A673 (cell line): ENCODE measurements at regions of chr3 and their contacts with region 1.

Region 1: DNA sequence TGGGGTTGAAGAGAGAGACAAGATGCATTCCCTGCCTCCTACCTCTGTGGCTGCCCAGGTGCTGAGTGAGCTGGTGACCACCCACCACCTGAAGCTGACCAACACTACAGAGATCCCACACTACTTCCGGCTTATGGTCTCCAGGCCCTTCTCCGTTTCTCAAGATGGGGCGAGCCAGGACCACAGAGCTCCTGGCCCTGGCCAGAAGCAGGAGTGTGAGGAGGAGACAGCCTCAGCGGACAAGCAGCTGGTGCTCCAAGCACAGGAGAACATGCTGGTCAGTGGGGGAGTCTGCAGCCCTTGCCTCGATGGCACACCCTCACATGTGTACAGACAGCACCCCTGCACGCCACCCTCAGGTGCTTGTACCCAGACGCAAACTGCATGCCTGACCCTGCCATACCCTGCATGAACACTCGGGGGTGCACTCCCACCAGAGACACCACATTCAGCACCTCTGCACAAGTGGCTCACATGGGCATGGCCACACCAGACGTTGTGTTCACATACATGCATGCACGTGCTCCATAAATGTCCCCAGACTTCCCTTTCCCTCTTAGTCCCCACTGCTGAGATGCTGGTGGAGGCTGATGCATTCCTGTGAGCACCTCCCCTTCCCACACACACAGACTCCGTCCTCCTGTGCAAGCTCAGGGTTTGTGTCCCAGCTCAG is 19.0 kb downstream of the ACAA1 start:
- DNase-seq: peak; percentile 58
- H3K4me3 ChIP-seq: no peak overlapping the region
- H3K27ac ChIP-seq: no peak overlapping the region
- H3K4me1 ChIP-seq: no peaks in the 10 kb centered on the region
- H3K27me3 ChIP-seq: no peaks in the 10 kb centered on the region
- CTCF ChIP-seq: peak; percentile 65

Region 2: DNA sequence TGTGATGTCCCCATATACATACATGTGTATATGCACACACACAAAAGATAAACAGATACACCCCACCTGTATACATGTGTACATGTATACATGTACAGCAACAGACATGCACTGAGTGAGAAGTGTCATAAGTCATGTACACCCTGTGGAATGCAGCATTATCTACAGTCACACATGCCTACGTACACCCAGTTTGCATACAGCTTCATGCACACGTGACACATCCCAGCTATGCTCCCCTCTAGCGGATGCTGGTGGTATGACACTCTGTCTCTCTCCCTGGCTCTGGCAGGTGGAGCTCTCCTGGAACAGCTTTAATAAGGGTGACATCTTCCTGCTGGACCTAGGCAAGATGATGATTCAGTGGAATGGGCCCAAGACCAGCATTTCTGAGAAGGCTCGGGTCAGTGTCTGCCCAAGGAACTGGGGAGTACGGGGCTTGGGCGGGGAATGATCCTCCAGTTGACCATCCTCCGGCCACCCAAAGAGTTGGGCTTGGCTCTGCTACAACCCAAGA is 121.0 kb before region 1 on chr3:
- CTCF ChIA-PET with region 1: no interaction called
- POLR2A ChIA-PET with region 1: no interaction called
- intact Hi-C with region 1: no loop called
- DNase-seq: peak; percentile 73
- H3K4me3 ChIP-seq: no peak overlapping the region
- H3K27ac ChIP-seq: no peak overlapping the region
- H3K4me1 ChIP-seq: peaks cover 5% of the 10 kb centered on the region
- H3K27me3 ChIP-seq: no peaks in the 10 kb centered on the region
- CTCF ChIP-seq: peak; percentile 70

Region 3: GRCh38 chr3:38131621-38132369 is 13.9 kb after region 1 on chr3:
- CTCF ChIA-PET with region 1: no interaction called
- POLR2A ChIA-PET with region 1: no interaction called
- intact Hi-C with region 1: no loop called
- DNase-seq: peak; percentile 22
- H3K4me3 ChIP-seq: no peak overlapping the region
- H3K27ac ChIP-seq: no peak overlapping the region
- H3K4me1 ChIP-seq: no peaks in the 10 kb centered on the region
- H3K27me3 ChIP-seq: no peaks in the 10 kb centered on the region
- CTCF ChIP-seq: peak; percentile 55

Region 4: GRCh38 chr3:38281895-38282675 is 164.2 kb after region 1 on chr3 and contains the start of gene SLC22A14:
- CTCF ChIA-PET with region 1: no interaction called
- POLR2A ChIA-PET with region 1: no interaction called
- intact Hi-C with region 1: loop called (anchors 10 kb)
- DNase-seq: no peak
- H3K4me3 ChIP-seq: no peak within 1 kb of the TSS
- H3K27ac ChIP-seq: no peak within 1 kb of the TSS
- H3K4me1 ChIP-seq: no peaks in the 10 kb centered on the region
- H3K27me3 ChIP-seq: no peaks in the 10 kb centered on the region
- CTCF ChIP-seq: 0 out of 2 replicates have a peak, but pooled peaks have one; percentile 24
- total RNA-seq, gene SLC22A14: 0.22 and 0.26 TPM in 2 replicates

Region 5: DNA sequence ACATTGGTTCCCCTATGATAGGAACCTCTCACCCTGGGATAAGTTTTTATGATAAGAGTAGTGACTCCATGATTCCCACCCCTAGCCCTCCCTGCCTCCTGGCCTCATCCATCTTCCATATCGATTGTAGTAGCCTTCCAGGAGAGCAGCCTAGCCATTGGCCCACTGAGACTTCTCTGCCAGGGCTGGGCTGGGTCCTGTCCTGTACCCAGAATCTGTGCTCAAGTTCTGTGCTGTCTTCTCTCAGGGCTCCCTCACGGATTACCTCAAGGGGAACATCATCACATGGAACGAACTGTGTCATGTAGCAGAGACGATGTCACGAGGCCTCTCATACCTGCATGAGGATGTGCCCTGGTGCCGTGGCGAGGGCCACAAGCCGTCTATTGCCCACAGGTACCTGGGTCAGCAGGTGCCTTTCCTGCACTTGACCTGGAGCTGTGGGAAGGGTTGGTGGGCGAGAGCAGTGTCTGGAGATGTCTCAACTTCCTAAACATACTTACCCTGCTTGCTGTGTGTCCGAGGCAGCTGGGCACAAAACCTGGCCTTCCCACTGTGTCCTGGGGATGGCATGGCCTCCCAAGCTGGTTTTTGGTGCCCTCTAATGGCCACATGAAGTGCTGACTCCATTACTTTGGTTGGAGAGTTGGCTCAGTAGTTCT is 361.7 kb after region 1 on chr3:
- CTCF ChIA-PET with region 1: no interaction called
- POLR2A ChIA-PET with region 1: no interaction called
- intact Hi-C with region 1: loop called (anchors 5 kb)
- DNase-seq: peak; percentile 30
- H3K4me3 ChIP-seq: no peak overlapping the region
- H3K27ac ChIP-seq: no peak overlapping the region
- H3K4me1 ChIP-seq: no peaks in the 10 kb centered on the region
- H3K27me3 ChIP-seq: no peaks in the 10 kb centered on the region
- CTCF ChIP-seq: peak; percentile 64

Region 6: DNA sequence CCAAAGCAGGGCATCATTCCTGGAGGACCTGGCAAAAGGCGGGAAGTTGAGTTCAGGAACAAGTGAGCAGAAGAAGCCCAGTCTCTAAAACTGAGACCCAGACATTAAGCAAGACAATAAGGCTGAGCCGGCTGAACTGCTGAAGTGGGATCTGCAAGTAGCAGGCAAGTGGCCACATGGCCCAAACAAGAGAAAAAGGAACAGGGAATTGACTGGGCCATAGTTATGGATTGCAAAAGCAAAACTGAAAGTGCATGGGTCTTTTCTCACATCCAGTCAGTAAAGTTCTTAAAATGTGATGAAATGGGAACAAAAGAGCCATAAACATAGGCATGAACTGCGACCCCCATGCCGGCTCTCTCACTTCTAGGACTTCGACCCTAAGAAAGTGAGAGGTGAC is 832.7 kb after region 1 on chr3:
- CTCF ChIA-PET with region 1: no interaction called
- POLR2A ChIA-PET with region 1: no interaction called
- intact Hi-C with region 1: no loop called
- DNase-seq: no peak
- H3K4me3 ChIP-seq: no peak overlapping the region
- H3K27ac ChIP-seq: no peak overlapping the region
- H3K4me1 ChIP-seq: no peaks in the 10 kb centered on the region
- H3K27me3 ChIP-seq: no peaks in the 10 kb centered on the region
- CTCF ChIP-seq: no peak